HEK293 (cell line): ENCODE measurements at regions of chr19 and their contacts with region 1.

Region 1: DNA sequence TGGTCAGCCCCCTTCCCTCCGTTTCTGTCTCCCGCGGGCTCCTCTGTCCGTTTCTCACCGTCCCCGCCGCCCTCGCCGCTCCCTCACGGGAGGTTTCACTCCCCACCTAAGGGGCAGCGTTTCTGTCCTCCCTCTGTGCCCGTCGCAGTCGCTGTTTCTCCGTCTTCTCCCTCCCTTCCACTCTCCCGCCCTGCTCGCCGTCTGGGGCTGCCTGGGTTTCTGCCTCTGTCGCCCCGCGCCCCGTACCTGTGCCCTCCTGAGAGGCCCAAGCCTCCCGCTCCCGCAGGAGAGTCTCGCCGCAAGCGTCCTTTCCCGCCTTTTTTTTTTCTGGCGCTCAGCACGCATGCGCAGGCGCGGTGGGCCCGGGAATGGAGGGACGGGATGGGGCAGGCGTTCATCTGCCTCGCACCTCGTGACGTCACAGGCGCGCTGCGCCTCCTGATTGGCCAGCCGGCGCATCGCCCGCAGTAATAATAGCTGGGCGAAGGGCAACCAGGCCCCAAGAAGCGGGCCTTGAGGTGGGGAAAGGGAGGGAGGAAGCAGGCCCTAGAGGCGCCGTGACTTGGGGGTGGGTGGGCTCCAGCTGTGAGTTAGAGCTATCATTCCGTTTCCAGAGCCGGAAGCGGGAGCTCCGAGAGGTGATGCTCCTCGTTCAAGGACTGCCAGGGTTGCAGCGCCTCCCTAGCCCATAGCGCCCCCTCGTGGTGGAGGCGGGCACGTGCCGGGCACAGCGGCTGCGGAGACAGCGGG is 15.4 kb downstream of the SSC5D start:
- H3K4me3 ChIP-seq: peak overlapping the region; percentile 50
- H3K27ac ChIP-seq: peak overlapping the region; percentile 33; the same call in 1 of the 2 replicates
- H3K4me1 ChIP-seq: no peaks in the 10 kb centered on the region
- CTCF ChIP-seq: peak; percentile 97

Region 2: DNA sequence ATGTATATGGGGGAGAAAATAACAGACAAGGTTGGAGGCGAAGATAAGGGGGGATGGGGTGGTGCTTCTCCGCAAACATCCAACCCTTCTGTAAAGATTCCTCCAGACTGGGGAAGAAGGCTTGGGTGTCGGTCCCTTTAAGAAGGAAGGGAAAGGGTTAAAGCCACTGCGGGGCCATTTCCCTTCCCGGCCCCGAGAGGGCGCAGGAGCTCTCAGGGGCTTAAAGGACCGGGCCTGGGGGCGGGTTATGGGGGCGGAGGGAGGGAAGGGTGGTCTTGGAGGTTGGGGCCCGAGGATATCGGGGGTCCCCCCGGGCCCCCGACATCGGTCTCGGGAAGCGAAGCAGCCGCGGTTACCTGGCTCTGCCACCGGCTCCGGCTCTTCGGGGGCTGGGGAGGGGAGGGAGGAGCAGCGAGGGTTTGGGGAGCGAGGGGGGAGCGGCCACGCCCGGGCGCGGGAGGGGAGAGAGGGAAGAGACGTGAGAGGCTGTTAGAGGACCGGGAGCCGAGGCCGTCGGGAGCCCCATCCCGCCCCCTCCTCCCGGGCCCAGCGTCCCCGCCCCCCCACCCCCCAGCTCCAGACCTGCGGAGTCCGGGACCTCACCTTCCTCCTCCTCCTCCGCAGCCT is 357.5 kb before region 1 on chr19:
- CTCF ChIA-PET with region 1: interaction called, 32 read pairs
- POLR2A ChIA-PET with region 1: interaction called, 8 read pairs
- H3K4me3 ChIP-seq: peak overlapping the region; percentile 46
- H3K27ac ChIP-seq: no peak overlapping the region
- H3K4me1 ChIP-seq: no peaks in the 10 kb centered on the region
- CTCF ChIP-seq: peak; percentile 61; the same call in 1 of the 2 replicates

Region 3: DNA sequence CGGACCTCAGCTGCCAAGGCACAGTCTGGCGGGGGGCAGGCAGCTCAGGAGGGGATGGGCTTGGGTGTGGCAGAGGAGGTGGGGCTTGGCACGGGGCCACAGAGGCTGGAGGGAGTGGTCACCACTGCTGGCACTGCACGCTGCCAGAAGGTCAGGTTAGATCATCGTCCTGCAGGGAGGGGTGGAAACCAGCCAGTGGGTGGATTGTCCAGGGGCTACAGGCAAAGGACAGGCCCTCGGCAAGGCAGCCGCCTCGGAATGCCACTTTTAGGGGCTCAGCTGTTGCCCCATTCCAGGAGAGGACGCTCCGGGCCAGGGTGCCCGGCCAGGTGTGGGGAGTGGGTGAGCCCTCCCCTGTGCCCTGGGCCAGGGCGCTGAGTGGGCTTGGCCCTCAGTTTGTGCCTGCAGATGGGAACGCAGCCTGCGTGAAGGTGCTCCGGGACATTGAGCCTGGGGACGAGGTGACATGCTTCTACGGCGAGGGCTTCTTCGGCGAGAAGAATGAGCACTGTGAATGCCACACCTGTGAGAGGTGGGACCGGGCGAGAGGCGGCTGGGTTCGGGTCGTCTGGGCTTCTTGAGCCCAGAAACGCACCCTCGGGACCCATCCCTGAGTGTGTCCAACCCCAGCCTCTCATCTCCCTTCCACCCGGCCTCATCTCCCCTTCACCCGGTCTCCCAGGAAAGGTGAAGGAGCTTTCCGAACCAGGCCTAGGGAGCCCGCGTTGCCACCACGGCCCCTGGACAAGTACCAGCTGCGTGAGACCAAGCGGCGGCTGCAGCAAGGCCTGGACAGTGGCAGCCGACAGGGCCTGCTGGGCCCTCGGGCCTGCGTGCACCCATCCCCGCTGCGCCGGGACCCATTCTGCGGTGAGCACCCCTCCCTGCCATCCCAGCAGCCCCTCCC is 157.6 kb before region 1 on chr19:
- CTCF ChIA-PET with region 1: no interaction called
- POLR2A ChIA-PET with region 1: no interaction called
- H3K4me3 ChIP-seq: no peak overlapping the region
- H3K27ac ChIP-seq: no peak overlapping the region
- H3K4me1 ChIP-seq: peaks cover 5% of the 10 kb centered on the region; the same call in 1 of the 2 replicates
- CTCF ChIP-seq: no peak

Region 4: GRCh38 chr19:55358943-55359633 is 144.6 kb before region 1 on chr19:
- CTCF ChIA-PET with region 1: no interaction called
- POLR2A ChIA-PET with region 1: no interaction called
- H3K4me3 ChIP-seq: no peak overlapping the region
- H3K27ac ChIP-seq: no peak overlapping the region
- H3K4me1 ChIP-seq: 0 out of 2 replicates have a peak, but pooled peaks cover 2% of the 10 kb centered on the region
- CTCF ChIP-seq: no peak

Region 5: GRCh38 chr19:55369671-55370304 is 133.9 kb before region 1 on chr19:
- CTCF ChIA-PET with region 1: no interaction called
- POLR2A ChIA-PET with region 1: no interaction called
- H3K4me3 ChIP-seq: peak overlapping the region; percentile 48
- H3K27ac ChIP-seq: no peak overlapping the region
- H3K4me1 ChIP-seq: peaks cover 5% of the 10 kb centered on the region; the same call in 1 of the 2 replicates
- CTCF ChIP-seq: no peak

Region 6: GRCh38 chr19:55426042-55426441 is 77.6 kb before region 1 on chr19:
- CTCF ChIA-PET with region 1: interaction called, 10 read pairs
- POLR2A ChIA-PET with region 1: no interaction called
- H3K4me3 ChIP-seq: no peak overlapping the region
- H3K27ac ChIP-seq: no peak overlapping the region
- H3K4me1 ChIP-seq: no peaks in the 10 kb centered on the region
- CTCF ChIP-seq: no peak

Region 7: GRCh38 chr19:55467236-55468053 is 36.2 kb before region 1 on chr19:
- CTCF ChIA-PET with region 1: interaction called, 152 read pairs
- POLR2A ChIA-PET with region 1: interaction called, 5 read pairs
- H3K4me3 ChIP-seq: no peak overlapping the region
- H3K27ac ChIP-seq: no peak overlapping the region
- H3K4me1 ChIP-seq: no peaks in the 10 kb centered on the region
- CTCF ChIP-seq: peak; percentile 91

Region 8: GRCh38 chr19:55484593-55485438 is 18.9 kb before region 1 on chr19 and contains the start of gene NAT14:
- CTCF ChIA-PET with region 1: interaction called, 42 read pairs
- POLR2A ChIA-PET with region 1: interaction called, 12 read pairs
- H3K4me3 ChIP-seq: peak within 1 kb of the TSS; percentile 91
- H3K27ac ChIP-seq: peak within 1 kb of the TSS; percentile 59; the same call in 1 of the 2 replicates
- H3K4me1 ChIP-seq: peaks cover 23% of the 10 kb centered on the region
- CTCF ChIP-seq: no peak

Region 9: GRCh38 chr19:55566823-55567222 is 63.1 kb after region 1 on chr19:
- CTCF ChIA-PET with region 1: no interaction called
- POLR2A ChIA-PET with region 1: no interaction called
- H3K4me3 ChIP-seq: no peak overlapping the region
- H3K27ac ChIP-seq: no peak overlapping the region
- H3K4me1 ChIP-seq: no peaks in the 10 kb centered on the region
- CTCF ChIP-seq: no peak

Region 10: GRCh38 chr19:55605207-55605636 is 101.5 kb after region 1 on chr19:
- CTCF ChIA-PET with region 1: interaction called, 15 read pairs
- POLR2A ChIA-PET with region 1: interaction called, 4 read pairs
- H3K4me3 ChIP-seq: peak overlapping the region; percentile 97
- H3K27ac ChIP-seq: peak overlapping the region; percentile 88; the same call in 1 of the 2 replicates
- H3K4me1 ChIP-seq: peaks cover 8% of the 10 kb centered on the region; the same call in 1 of the 2 replicates
- CTCF ChIP-seq: no peak

Region 11: GRCh38 chr19:55632463-55632834 is 128.8 kb after region 1 on chr19:
- CTCF ChIA-PET with region 1: interaction called, 35 read pairs
- POLR2A ChIA-PET with region 1: interaction called, 8 read pairs
- H3K4me3 ChIP-seq: no peak overlapping the region
- H3K27ac ChIP-seq: no peak overlapping the region
- H3K4me1 ChIP-seq: peaks cover 12% of the 10 kb centered on the region
- CTCF ChIP-seq: peak; percentile 79